G401 (cell line): ENCODE measurements at regions of chr15 and their contacts with region 1.

Region 1: GRCh38 chr15:85837011-85837433 is 42.3 kb upstream of the KLHL25 start:
- DNase-seq: no peak

Region 2: DNA sequence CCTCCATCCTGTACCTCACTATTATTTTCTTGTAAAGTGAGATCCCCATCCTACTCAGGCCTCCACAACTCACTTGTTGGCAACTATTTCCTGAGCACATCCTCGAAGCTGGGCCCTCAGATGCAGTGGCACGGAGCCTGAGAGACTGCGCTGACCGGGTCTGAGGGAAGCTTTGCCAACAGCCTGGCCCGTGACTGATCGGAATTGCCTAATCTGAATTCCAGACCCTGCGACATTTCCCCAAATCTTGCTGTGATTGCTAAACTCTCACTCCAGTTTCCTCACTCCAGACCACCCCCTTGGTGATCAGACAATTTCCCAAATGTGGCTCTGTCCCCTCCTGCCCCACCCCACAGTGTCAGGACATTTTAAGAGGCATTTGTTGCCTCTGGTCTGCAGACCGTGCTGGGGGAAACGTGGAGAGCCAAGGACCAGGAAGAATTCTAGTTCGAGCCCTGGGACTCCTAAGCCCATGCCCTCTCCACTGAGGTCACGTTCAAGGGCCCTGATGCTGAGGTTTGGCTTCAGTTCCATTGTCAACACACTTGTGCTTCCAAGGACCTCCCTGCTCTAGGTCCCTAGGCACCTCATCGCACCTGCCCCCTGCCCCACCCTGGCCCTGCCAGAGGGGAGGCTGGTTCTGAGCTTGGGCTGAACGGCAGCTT is 65.1 kb before region 1 on chr15:
- in situ Hi-C with region 1: loop called (anchors 5 kb)
- DNase-seq: no peak

Region 3: DNA sequence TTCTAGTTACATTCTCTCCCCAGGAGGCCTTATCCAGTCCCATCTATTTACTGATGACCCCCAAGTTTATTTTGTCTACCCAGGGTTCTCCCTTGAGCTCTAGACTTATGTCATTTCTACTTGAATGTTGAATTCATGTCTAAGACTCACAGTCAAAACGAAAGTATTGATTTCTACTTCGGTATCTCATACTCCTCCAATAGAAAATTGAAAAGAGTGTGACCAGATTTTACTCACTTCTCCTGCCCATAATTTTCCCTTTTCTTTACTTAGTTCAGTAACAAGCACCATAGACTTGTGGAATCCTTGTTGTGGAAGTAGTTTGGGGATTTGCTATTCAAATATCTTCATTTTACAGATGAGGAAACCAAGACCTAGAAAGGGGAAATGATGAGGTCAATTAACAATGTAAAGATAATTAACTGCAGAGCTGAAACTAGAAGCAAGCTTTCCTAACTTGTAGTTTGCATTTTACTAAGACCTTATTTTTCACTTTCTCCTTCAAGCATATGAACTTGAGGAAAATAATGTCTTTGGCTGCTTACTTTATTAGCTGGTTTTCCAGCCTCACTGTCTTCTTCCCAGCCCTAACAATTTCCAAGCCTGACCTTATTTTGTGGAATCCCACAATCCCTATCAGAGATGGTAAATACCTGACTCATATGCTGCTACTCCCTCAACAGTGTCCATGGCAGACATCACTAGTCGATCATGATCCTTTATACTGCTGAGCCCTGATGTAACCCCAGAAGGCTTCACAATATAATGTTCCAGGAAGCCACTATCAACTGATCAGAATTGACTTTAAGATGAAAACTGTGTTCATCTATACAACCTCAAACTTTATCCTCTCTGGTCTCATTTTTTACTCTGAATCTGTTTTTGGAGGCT is 118.7 kb after region 1 on chr15:
- in situ Hi-C with region 1: no loop called
- DNase-seq: no peak